ENCODE measurements at regions of chr2 and their contacts with region 1.

Region 1: DNA sequence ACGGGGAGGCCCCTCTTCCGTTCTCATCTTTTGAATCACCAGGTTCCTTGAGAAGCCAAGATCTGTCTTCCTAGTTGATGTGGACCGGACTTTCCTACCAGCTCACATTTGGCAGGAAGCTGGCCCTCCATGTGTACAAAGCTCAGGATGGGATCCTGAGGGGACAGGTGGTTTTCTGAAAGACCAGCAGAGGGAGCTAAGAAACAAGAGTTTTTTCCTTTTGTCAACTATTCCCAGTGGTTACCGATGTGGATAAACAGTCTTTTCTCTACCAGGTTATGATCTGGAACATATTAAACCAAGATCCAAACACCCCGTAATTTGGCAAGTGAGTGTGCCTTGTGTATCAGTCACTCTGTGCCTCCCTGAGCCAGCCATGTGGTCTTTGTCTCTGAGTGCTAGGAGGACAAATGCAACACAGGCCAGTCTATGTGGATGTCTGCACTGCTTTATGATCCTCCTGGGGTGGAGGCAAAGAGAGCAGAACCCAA is 25.1 kb upstream of the ARHGAP25 start:
- DNase-seq: no peak
- ATAC-seq: peak; percentile 72
- H3K4me3 ChIP-seq: no peak overlapping the region
- H3K4me1 ChIP-seq: peaks cover 3% of the 10 kb centered on the region
- CTCF ChIP-seq: peak; percentile 58

Region 2: DNA sequence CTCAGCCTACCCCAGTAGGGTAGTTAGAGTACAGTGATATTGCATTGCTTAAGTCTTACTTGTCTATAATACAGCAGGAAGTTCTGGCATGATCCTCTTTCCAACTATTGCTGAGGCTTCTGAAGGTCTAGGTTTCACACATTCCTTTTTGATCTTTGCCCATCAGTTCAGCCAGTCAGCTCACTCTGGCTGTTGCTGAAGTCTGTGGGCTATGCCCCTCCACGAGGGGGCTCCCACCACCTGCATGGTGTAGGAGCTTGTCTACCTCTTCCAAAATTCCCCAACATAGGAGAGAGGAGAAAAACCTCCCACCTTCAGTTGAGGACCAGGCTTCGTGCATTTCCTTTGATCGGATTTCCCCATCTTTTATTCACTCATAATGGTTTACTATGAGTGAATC is 39.8 kb before region 1 on chr2:
- intact Hi-C with region 1: loop called in 1 of 2 experiments (anchors 2 kb)
- DNase-seq: no peak
- ATAC-seq: no peak
- H3K4me3 ChIP-seq: no peak overlapping the region
- H3K4me1 ChIP-seq: no peaks in the 10 kb centered on the region
- CTCF ChIP-seq: no peak

Region 3: DNA sequence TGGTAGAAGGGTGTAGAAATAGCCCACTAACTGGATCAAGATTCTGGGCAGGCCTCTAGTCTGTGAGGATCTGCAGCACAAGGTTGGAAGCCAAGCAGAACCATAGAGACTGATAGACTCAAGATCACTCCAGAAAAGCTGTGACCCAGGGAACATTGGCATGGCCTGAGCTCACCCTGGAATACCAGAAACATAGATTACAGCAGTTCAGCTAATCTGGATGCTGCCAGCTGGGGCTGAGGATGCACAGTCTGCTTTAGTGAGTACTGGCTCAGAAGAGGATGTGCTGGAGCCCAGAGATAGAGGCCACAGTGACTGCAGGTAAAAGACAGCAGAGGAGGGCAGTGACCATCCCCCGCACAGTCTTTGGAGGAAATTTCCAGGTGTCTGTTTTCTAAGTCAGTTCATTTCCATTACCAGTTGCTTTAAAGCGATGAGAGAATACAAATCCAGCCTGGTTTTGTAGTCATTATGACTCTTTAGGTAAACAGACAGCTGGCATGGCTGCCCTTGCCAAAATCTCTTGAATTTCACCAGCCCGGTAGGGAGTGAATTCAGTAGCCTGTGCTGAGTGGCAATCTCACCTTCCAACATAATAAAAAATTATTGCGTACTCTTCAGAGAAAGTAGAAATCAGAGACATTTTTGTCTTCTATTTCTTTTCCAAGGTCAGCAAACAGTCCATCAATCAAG is 422.7 kb after region 1 on chr2:
- intact Hi-C with region 1: no loop called
- DNase-seq: no peak
- ATAC-seq: no peak
- H3K4me3 ChIP-seq: no peak overlapping the region
- H3K4me1 ChIP-seq: no peaks in the 10 kb centered on the region
- CTCF ChIP-seq: no peak